ENCODE measurements at regions of chr2 and their contacts with region 1.

Region 1: DNA sequence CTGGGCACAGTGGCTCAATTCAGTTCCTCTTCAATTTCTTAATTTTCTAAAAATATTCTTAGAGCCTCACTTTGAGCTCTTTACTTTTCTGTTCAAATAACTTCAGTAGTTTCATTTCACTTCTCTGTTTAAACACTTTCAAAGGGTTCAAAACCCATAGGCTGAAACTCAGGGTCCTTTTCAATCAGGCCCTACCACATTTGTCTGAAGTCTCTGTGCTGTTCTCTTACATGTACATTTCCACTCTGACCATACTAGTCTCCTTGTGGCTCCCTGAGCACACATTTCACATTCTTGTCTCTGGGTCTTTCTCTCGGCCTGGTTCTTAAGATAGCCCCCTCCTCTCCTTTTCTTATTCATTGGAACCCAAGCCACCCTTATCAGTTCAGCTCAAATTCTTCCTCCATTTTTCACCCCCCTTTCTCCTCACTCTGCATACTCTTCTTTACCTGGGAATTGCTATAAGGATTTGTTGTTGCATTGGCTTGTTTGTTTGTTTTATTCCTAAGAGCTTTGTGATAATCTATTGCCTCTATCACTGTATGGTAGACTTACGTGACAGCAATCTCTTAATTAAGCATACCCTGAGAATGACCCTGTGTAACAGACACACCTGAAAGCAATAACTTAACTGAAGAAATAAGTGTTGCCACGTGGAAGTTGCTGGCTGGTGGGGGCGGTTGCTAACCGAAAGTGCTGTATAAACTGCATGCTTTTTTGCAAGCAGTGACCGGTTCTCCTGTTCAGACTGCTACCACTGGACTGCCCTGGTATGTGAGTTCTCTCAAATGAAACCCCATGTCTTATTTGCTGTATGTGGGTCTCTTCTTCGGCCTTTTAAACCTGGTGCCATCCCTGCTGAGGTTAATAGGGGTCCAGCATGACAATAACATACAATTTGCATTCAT is 27.7 kb upstream of the ACADL start:
- DNase-seq: no peak
- H3K4me3 ChIP-seq: no peak overlapping the region
- H3K27ac ChIP-seq: no peak overlapping the region
- H3K4me1 ChIP-seq: peaks cover 0 to 10% (median 0%) of the 10 kb centered on the region in 4 donors
- H3K27me3 ChIP-seq: no peaks in the 10 kb centered on the region
- CTCF ChIP-seq: no peak

Region 2: DNA sequence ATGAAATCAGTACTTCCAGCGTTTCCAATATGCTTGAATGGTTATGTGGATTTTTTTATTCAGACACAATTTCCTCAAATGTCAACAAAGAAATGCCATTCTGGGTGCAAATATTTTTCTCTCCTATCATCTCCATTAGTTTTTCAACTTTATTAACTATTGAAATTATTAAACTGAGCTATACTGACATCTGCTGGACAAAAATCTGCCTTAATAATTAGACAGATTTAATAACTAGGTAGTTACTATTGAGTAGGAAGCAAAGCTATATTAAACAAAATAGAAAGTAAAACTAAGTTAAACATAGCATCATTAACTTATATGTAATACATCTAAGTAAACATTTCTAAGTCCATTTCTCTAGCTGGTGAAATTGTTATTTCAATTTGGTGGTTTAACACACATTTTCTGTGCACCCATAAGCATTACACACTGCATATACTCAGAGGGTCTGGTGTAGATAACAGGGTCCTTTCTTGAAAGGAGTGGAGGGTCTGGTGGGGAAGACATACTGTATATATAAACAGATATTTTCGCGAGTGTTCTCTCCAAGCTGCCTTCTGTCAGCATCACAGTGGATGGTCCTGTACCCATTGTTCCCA is 146.6 kb after region 1 on chr2:
- intact Hi-C with region 1: loop called (anchors 5 kb)
- DNase-seq: no peak
- H3K4me3 ChIP-seq: no peak overlapping the region
- H3K27ac ChIP-seq: no peak overlapping the region
- H3K4me1 ChIP-seq: no peaks in the 10 kb centered on the region
- H3K27me3 ChIP-seq: no peaks in the 10 kb centered on the region
- CTCF ChIP-seq: peak; percentile 41 to 49

Measured in tibial artery (tissue), 4 donors.